GM12878 (cell line): ENCODE measurements at regions of chr22 and their contacts with region 1.

Region 1: GRCh38 chr22:30634471-30635233 is 929 bp upstream of the SLC35E4 start:
- DNase-seq: peak; percentile 47
- ATAC-seq: peak; percentile 70
- H3K4me3 ChIP-seq: peak overlapping the region; percentile 76
- H3K27ac ChIP-seq: peak overlapping the region; percentile 51
- H3K4me1 ChIP-seq: peaks cover 4% of the 10 kb centered on the region; the same call in 1 of the 2 replicates
- H3K27me3 ChIP-seq: no peaks in the 10 kb centered on the region
- CTCF ChIP-seq: peak; percentile 92 to 96 (median 93)
- EP300 ChIP-seq: no peak
- POLR2A ChIP-seq: no peak
- RAD21 ChIP-seq: peak; percentile 96

Region 2: DNA sequence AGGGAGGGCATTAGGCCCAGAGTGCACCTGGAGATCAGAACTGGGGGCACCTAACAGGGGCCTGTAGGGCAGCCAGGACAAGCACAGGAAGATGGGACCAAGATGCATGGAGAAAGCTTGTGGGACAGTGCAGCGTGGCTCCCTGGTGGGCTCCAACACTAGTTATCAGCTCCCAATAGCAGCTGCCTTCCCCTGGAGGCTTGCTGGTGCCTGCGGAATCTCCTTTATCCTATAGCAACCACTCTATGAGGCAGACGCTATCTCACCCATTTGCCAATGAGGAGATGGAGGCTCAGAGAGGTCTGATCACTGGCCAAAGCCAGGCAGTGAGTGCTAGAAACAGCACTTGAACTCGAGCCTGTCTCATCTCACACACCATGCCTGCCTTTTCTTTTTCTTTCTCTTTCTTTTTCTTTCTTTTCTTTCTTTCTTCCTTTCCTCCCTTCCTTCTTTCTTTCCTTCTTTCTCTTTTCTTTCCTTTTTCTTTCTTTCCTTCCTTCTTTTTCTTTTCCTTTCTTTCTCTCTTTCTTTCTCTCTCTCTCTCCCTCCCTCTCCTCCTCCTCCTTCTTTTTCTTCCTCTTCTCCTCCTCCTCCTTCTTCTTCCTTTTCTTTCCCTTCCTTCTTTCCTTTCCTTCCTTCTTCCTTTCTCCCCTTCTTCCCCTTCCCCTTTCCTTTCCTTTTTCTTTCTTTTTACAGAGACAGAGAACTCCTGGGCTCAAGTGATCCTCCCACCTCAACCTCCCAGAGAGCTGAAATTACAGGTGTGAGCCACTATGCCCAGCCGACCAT is 113.1 kb before region 1 on chr22:
- CTCF ChIA-PET with region 1: no interaction called
- POLR2A ChIA-PET with region 1: no interaction called
- RAD21 ChIA-PET with region 1: no interaction called
- SMC1A ChIA-PET with region 1: no interaction called
- in situ Hi-C with region 1: no loop called
- intact Hi-C with region 1: no loop called
- DNase-seq: no peak
- ATAC-seq: no peak
- H3K4me3 ChIP-seq: no peak overlapping the region
- H3K27ac ChIP-seq: no peak overlapping the region
- H3K4me1 ChIP-seq: no peaks in the 10 kb centered on the region
- H3K27me3 ChIP-seq: peaks cover 0 to 4% of the 10 kb centered on the region in 2 experiments; a peak in 2 of 4 replicates
- CTCF ChIP-seq: no peak
- EP300 ChIP-seq: no peak
- POLR2A ChIP-seq: no peak
- RAD21 ChIP-seq: no peak

Region 3: GRCh38 chr22:30649430-30650007 is 14.9 kb after region 1 on chr22:
- CTCF ChIA-PET with region 1: interaction called, 15 read pairs
- POLR2A ChIA-PET with region 1: interaction called, 6 read pairs
- RAD21 ChIA-PET with region 1: interaction called, 12 read pairs
- SMC1A ChIA-PET with region 1: interaction called, 4 read pairs
- in situ Hi-C with region 1: no loop called
- intact Hi-C with region 1: no loop called
- DNase-seq: no peak
- ATAC-seq: peak; percentile 100
- H3K4me3 ChIP-seq: no peak overlapping the region
- H3K27ac ChIP-seq: peak overlapping the region; percentile 28; the same call in 1 of the 2 replicates
- H3K4me1 ChIP-seq: peaks cover 8% of the 10 kb centered on the region
- H3K27me3 ChIP-seq: no peaks in the 10 kb centered on the region
- CTCF ChIP-seq: peak in 1 of 3 experiments; percentile 16; a peak in 1 of 6 replicates
- EP300 ChIP-seq: no peak
- POLR2A ChIP-seq: peak; percentile 55; the same call in 1 of the 2 replicates
- RAD21 ChIP-seq: no peak

Region 4: GRCh38 chr22:30705710-30706651 is 71.3 kb after region 1 on chr22:
- CTCF ChIA-PET with region 1: interaction called, 19 read pairs
- POLR2A ChIA-PET with region 1: interaction called, 5 read pairs
- RAD21 ChIA-PET with region 1: interaction called, 5 read pairs
- SMC1A ChIA-PET with region 1: interaction called, 7 read pairs
- in situ Hi-C with region 1: no loop called
- intact Hi-C with region 1: loop called (anchors 2 kb)
- DNase-seq: peak; percentile 72
- ATAC-seq: peak; percentile 85
- H3K4me3 ChIP-seq: peak overlapping the region; percentile 19; the same call in 1 of the 2 replicates
- H3K27ac ChIP-seq: peak overlapping the region; percentile 70
- H3K4me1 ChIP-seq: peaks cover 35% of the 10 kb centered on the region
- H3K27me3 ChIP-seq: no peaks in the 10 kb centered on the region
- CTCF ChIP-seq: peak in 1 of 3 experiments; percentile 6; a peak in 1 of 6 replicates
- EP300 ChIP-seq: no peak; a peak in 2 of 4 replicates
- POLR2A ChIP-seq: peak; percentile 51; the same call in 1 of the 2 replicates
- RAD21 ChIP-seq: no peak

Region 5: DNA sequence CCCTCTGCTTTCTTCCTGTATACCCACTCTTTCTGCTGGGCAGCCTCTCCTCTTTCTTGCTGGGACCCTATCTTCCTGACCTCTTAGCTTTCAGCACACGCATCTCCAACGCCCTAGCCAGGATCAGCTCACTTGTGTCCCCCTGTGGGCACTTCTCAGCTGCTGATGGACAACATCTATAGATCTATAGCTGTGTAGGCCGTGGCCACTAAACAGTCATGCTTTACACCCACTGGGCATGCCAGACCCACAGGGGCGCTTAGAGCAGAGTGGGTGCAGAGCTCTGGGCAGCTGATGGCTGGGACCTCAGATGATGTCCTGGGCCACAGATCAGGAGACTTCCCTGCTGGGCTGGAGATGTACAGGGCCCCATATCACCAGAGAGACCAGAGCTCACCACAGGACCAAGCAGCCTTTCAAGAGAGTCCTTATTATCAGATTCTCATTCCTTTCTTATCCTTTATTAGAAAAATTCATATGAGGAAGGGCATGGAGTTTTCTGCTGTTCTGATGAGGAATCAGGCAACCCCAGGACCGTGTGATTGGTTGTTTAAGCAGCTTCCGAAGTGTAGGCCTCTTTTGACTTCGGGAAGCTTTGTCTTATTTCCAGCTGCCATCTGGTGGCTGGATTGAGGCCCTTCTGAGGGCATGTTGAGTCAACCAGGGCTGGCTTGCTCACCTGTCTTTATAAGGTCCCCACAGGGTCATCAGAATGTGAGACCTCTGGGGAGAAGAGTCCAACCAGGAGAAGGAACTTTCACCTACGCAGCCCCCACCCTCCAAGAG is 120.5 kb after region 1 on chr22:
- CTCF ChIA-PET with region 1: interaction called, 243 read pairs
- POLR2A ChIA-PET with region 1: interaction called, 15 read pairs
- RAD21 ChIA-PET with region 1: interaction called, 165 read pairs
- SMC1A ChIA-PET with region 1: interaction called, 159 read pairs
- in situ Hi-C with region 1: loop called (anchors 5 kb)
- intact Hi-C with region 1: loop called (anchors 1 kb)
- DNase-seq: no peak
- ATAC-seq: peak; percentile 98
- H3K4me3 ChIP-seq: no peak overlapping the region
- H3K27ac ChIP-seq: no peak overlapping the region
- H3K4me1 ChIP-seq: no peaks in the 10 kb centered on the region
- H3K27me3 ChIP-seq: no peaks in the 10 kb centered on the region
- CTCF ChIP-seq: peak; percentile 76 to 88 (median 81)
- EP300 ChIP-seq: no peak
- POLR2A ChIP-seq: no peak
- RAD21 ChIP-seq: peak; percentile 98

Region 6: DNA sequence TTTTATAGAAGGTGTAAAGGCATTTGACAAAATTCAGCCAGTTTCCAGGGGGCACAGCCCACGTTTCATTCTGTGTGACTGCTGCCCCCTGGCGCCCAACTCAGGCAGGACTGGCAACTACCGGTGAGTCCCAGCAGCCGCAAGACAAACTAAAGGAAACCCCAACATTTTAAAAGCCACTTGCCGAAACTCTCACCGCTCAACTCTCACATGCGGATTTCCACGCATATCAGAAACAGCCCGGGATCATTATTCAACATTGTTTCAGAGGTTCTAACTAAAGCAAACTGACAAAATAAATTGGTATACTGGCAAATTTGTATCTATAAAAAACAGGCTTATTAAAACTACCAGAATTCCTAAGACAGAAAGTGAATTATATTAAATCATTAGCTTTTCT is 285.8 kb after region 1 on chr22:
- CTCF ChIA-PET with region 1: interaction called, 33 read pairs
- POLR2A ChIA-PET with region 1: interaction called, 8 read pairs
- RAD21 ChIA-PET with region 1: interaction called, 10 read pairs
- SMC1A ChIA-PET with region 1: interaction called, 25 read pairs
- in situ Hi-C with region 1: loop called (anchors 25 kb)
- intact Hi-C with region 1: loop called (anchors 1 kb)
- DNase-seq: peak; percentile 27
- ATAC-seq: peak; percentile 85
- H3K4me3 ChIP-seq: peak overlapping the region; percentile 50; the same call in 1 of the 2 replicates
- H3K27ac ChIP-seq: no peak overlapping the region
- H3K4me1 ChIP-seq: peaks cover 3% of the 10 kb centered on the region; the same call in 1 of the 2 replicates
- H3K27me3 ChIP-seq: no peaks in the 10 kb centered on the region
- CTCF ChIP-seq: peak; percentile 85 to 87 (median 86)
- EP300 ChIP-seq: no peak
- POLR2A ChIP-seq: no peak
- RAD21 ChIP-seq: peak; percentile 64

Region 7: DNA sequence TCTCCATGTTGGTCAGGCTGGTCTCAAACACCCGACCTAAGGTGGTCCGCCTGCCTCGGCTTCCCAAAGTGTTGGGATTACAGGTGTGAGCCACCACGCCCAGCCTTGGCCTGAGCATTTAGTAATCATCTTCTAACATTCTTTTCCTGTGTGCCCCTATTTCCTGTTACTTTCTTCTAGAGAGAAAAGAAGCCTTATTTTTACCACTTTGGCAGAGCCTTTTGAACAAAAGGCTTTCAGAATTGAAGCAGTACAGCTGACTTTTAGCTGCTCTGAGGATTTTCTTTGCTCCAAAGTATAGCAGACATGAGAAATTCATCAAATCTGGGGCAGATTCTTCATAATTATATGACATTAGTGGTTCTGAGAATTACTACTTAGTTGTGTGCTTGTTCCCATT is 320.5 kb after region 1 on chr22:
- CTCF ChIA-PET with region 1: no interaction called
- POLR2A ChIA-PET with region 1: no interaction called
- RAD21 ChIA-PET with region 1: no interaction called
- SMC1A ChIA-PET with region 1: no interaction called
- in situ Hi-C with region 1: no loop called
- intact Hi-C with region 1: no loop called
- DNase-seq: no peak
- ATAC-seq: no peak
- H3K4me3 ChIP-seq: no peak overlapping the region
- H3K27ac ChIP-seq: no peak overlapping the region
- H3K4me1 ChIP-seq: no peaks in the 10 kb centered on the region
- H3K27me3 ChIP-seq: no peaks in the 10 kb centered on the region
- CTCF ChIP-seq: no peak
- EP300 ChIP-seq: no peak
- POLR2A ChIP-seq: no peak
- RAD21 ChIP-seq: no peak